ENCODE measurements at regions of chr15 and their contacts with region 1.

Region 1: DNA sequence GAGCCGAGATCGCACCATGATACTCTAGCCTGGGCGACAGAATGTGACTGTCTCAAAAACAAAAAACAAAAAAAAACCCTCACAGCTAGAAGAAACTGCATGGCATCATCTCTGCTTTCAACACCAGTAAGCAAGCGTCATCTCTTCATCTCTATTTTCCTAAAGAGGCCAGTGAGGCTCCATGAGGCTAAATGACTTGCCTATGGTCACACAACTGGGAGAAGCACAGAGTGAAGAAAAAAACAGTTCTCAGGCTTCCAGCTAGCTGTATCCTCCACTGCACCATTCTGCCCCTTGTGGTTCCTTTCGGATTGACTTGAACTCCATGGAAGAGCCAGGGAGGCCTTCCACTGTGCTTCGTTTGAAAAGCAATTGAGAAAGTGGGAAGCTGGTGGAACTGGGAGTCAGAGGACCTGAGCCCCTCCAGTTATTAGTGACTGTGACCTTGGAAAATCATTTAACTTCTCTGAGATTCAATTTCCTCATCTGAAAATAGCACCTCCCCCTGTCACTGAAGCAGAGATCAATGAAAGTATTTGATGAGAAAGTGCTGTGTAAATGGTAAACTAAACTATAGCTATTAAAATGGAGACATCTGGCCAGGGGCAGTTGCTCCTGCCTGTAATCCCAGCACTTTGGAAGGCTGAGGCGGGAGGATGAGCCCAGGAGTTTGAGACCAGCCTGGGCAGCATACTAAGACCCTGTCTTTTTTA is 32.1 kb upstream of the DENND4A start:
- DNase-seq: no peak
- ATAC-seq: no peak
- H3K4me3 Mint-ChIP-seq: no peak overlapping the region
- H3K27ac Mint-ChIP-seq: no peak overlapping the region
- H3K4me1 Mint-ChIP-seq: peaks cover 49% of the 10 kb centered on the region
- H3K27me3 Mint-ChIP-seq: no peaks in the 10 kb centered on the region

Region 2: GRCh38 chr15:65655026-65655425 is 169.2 kb before region 1 on chr15:
- CTCF ChIA-PET with region 1: no interaction called
- DNase-seq: no peak
- ATAC-seq: no peak
- H3K4me3 Mint-ChIP-seq: no peak overlapping the region
- H3K27ac Mint-ChIP-seq: no peak overlapping the region
- H3K4me1 Mint-ChIP-seq: peaks cover 9% of the 10 kb centered on the region
- H3K27me3 Mint-ChIP-seq: no peaks in the 10 kb centered on the region

Region 3: GRCh38 chr15:65792130-65792987 is 31.8 kb before region 1 on chr15 and contains the start of gene DENND4A:
- CTCF ChIA-PET with region 1: interaction called, 30 read pairs
- DNase-seq: peak; percentile 99
- ATAC-seq: peak; percentile 84
- H3K4me3 Mint-ChIP-seq: peak within 1 kb of the TSS; percentile 93
- H3K27ac Mint-ChIP-seq: peak within 1 kb of the TSS; percentile 97
- H3K4me1 Mint-ChIP-seq: peaks cover 63% of the 10 kb centered on the region
- H3K27me3 Mint-ChIP-seq: no peaks in the 10 kb centered on the region
- total RNA-seq, gene DENND4A: 47.3 to 52.0 TPM